CD8-positive, alpha-beta T cell (primary cell): ENCODE measurements at regions of chr1 and their contacts with region 1.

Region 1: DNA sequence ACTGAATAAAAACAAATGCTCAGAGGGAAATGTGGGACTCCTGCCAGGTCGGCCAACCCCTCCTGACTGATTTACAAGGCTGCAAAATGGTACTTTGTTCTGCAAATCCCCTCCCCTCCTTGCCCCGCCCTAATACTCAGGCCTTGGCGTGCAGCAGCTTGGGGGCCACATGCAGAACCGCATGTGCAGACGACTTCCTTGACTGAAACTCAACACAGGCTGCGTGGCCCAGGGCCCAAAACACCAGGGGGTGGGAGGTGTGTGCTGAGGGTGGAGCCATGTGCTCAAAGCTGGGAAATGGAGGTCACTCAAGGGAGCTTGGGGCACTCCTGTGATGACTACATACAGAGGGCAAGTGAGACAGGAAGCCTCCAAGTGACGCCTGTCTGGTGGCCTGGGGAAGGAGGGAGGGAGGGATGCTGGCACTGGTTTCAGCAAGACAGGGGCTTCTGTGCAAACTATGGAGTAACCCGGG is 87.2 kb downstream of the MRPL37 start:
- DNase-seq: peak; percentile 12 to 87 (median 71)
- ATAC-seq: peak; percentile 78
- H3K4me3 ChIP-seq: peak overlapping the region in 1 of 2 experiments; percentile 57
- H3K4me3 Mint-ChIP-seq: peak overlapping the region; percentile 78
- H3K27ac ChIP-seq: peak overlapping the region; percentile 61 to 71
- H3K27ac Mint-ChIP-seq: peak overlapping the region; percentile 99
- H3K4me1 ChIP-seq: peaks cover 96% of the 10 kb centered on the region
- H3K4me1 Mint-ChIP-seq: peaks cover 90% of the 10 kb centered on the region
- H3K27me3 ChIP-seq: no peaks in the 10 kb centered on the region
- H3K27me3 Mint-ChIP-seq: no peaks in the 10 kb centered on the region
- CTCF ChIP-seq: no peak

Region 2: DNA sequence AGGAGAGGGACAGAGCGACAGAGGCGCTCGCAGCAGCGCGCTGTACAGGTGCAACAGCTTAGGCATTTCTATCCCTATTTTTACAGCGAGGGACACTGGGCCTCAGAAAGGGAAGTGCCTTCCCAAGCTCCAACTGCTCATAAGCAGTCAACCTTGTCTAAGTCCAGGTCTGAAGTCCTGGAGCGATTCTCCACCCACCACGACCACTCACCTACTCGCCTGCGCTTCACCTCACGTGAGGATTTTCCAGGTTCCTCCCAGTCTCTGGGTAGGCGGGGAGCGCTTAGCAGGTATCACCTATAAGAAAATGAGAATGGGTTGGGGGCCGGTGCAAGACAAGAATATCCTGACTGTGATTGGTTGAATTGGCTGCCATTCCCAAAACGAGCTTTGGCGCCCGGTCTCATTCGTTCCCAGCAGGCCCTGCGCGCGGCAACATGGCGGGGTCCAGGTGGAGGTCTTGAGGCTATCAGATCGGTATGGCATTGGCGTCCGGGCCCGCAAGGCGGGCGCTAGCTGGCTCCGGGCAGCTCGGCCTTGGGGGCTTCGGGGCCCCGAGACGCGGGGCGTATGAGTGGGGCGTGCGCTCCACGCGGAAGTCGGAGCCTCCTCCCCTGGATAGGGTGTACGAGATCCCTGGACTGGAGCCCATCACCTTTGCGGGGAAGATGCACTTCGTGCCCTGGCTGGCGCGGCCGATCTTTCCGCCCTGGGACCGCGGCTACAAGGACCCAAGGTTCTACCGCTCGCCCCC is 87.3 kb before region 1 on chr1 and contains the starts of genes CYB5RL and MRPL37:
- CTCF ChIA-PET with region 1: no interaction called
- POLR2A ChIA-PET with region 1: interaction called, 5 read pairs
- intact Hi-C with region 1: loop called in 1 of 2 experiments (anchors 1 kb)
- DNase-seq: peak; percentile 74 to 96 (median 89)
- ATAC-seq: peak; percentile 97
- H3K4me3 ChIP-seq: peak within 1 kb of the TSS; percentile 59 to 93
- H3K4me3 Mint-ChIP-seq: peak within 1 kb of the TSS; percentile 94
- H3K27ac ChIP-seq: peak within 1 kb of the TSS; percentile 60 to 75
- H3K27ac Mint-ChIP-seq: peak within 1 kb of the TSS; percentile 84
- H3K4me1 ChIP-seq: peaks cover 19% of the 10 kb centered on the region
- H3K4me1 Mint-ChIP-seq: peaks cover 43% of the 10 kb centered on the region
- H3K27me3 ChIP-seq: no peaks in the 10 kb centered on the region
- H3K27me3 Mint-ChIP-seq: no peaks in the 10 kb centered on the region
- CTCF ChIP-seq: no peak
- total RNA-seq, gene CYB5RL: 2.1 to 3.0 TPM
- total RNA-seq, gene MRPL37: 27.4 to 29.8 TPM

Region 3: DNA sequence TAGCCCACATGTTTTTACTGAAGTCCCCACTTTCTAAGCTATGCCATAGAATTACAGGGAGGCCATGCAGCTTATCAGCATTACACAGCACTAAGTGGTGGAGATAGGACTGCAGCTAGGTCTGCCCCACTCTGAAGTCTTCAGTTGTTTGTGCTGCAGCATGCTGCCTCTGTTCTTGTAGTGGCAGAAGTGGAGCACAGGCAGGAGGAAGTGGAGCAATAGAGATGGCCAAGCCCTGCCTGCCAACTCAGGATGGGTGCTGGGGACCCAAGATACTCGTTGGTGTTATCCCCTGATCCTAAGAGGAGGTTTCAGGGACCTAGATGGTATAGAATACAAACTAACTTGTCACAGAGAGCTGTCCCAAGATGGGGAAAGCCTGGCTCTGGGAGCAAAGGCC is 74.3 kb before region 1 on chr1:
- CTCF ChIA-PET with region 1: no interaction called
- POLR2A ChIA-PET with region 1: no interaction called
- intact Hi-C with region 1: no loop called
- DNase-seq: no peak
- ATAC-seq: no peak
- H3K4me3 ChIP-seq: no peak overlapping the region
- H3K4me3 Mint-ChIP-seq: no peak overlapping the region
- H3K27ac ChIP-seq: no peak overlapping the region
- H3K27ac Mint-ChIP-seq: no peak overlapping the region
- H3K4me1 ChIP-seq: no peaks in the 10 kb centered on the region
- H3K4me1 Mint-ChIP-seq: no peaks in the 10 kb centered on the region
- H3K27me3 ChIP-seq: no peaks in the 10 kb centered on the region
- H3K27me3 Mint-ChIP-seq: no peaks in the 10 kb centered on the region
- CTCF ChIP-seq: no peak

Region 4: GRCh38 chr1:54297596-54298283 is 10.5 kb after region 1 on chr1:
- CTCF ChIA-PET with region 1: interaction called, 5 read pairs
- POLR2A ChIA-PET with region 1: interaction called, 10 read pairs
- intact Hi-C with region 1: no loop called
- DNase-seq: no peak
- ATAC-seq: no peak
- H3K4me3 ChIP-seq: no peak overlapping the region
- H3K4me3 Mint-ChIP-seq: peak overlapping the region; percentile 49
- H3K27ac ChIP-seq: peak overlapping the region in 1 of 2 experiments; percentile 29
- H3K27ac Mint-ChIP-seq: peak overlapping the region; percentile 66
- H3K4me1 ChIP-seq: peaks cover 77% of the 10 kb centered on the region
- H3K4me1 Mint-ChIP-seq: peaks cover 90% of the 10 kb centered on the region
- H3K27me3 ChIP-seq: no peaks in the 10 kb centered on the region
- H3K27me3 Mint-ChIP-seq: no peaks in the 10 kb centered on the region
- CTCF ChIP-seq: no peak

Region 5: GRCh38 chr1:54310439-54311328 is 23.5 kb after region 1 on chr1:
- CTCF ChIA-PET with region 1: interaction called, 7 read pairs
- POLR2A ChIA-PET with region 1: interaction called, 5 read pairs
- intact Hi-C with region 1: loop called in 1 of 2 experiments (anchors 1 kb)
- DNase-seq: peak in 3 of 9 experiments; percentile 26 to 47 (median 28)
- ATAC-seq: peak; percentile 55
- H3K4me3 ChIP-seq: peak overlapping the region in 1 of 2 experiments; percentile 1
- H3K4me3 Mint-ChIP-seq: peak overlapping the region; percentile 61
- H3K27ac ChIP-seq: no peak overlapping the region
- H3K27ac Mint-ChIP-seq: peak overlapping the region; percentile 80
- H3K4me1 ChIP-seq: peaks cover 72% of the 10 kb centered on the region
- H3K4me1 Mint-ChIP-seq: peaks cover 80% of the 10 kb centered on the region
- H3K27me3 ChIP-seq: no peaks in the 10 kb centered on the region
- H3K27me3 Mint-ChIP-seq: no peaks in the 10 kb centered on the region
- CTCF ChIP-seq: no peak

Region 6: GRCh38 chr1:54355931-54356679 is 68.9 kb after region 1 on chr1:
- CTCF ChIA-PET with region 1: interaction called, 4 read pairs
- POLR2A ChIA-PET with region 1: interaction called, 4 read pairs
- intact Hi-C with region 1: loop called (anchors 2 to 5 kb)
- DNase-seq: peak in 2 of 9 experiments; percentile 29 to 54
- ATAC-seq: peak; percentile 3
- H3K4me3 ChIP-seq: peak overlapping the region; percentile 36 to 64
- H3K4me3 Mint-ChIP-seq: peak overlapping the region; percentile 86
- H3K27ac ChIP-seq: peak overlapping the region; percentile 18 to 41
- H3K27ac Mint-ChIP-seq: peak overlapping the region; percentile 92
- H3K4me1 ChIP-seq: peaks cover 53% of the 10 kb centered on the region
- H3K4me1 Mint-ChIP-seq: peaks cover 88% of the 10 kb centered on the region
- H3K27me3 ChIP-seq: no peaks in the 10 kb centered on the region
- H3K27me3 Mint-ChIP-seq: no peaks in the 10 kb centered on the region
- CTCF ChIP-seq: no peak

Region 7: GRCh38 chr1:54754045-54754444 is 466.8 kb after region 1 on chr1:
- CTCF ChIA-PET with region 1: no interaction called
- POLR2A ChIA-PET with region 1: no interaction called
- intact Hi-C with region 1: no loop called
- DNase-seq: no peak
- ATAC-seq: no peak
- H3K4me3 ChIP-seq: no peak overlapping the region
- H3K4me3 Mint-ChIP-seq: no peak overlapping the region
- H3K27ac ChIP-seq: no peak overlapping the region
- H3K27ac Mint-ChIP-seq: no peak overlapping the region
- H3K4me1 ChIP-seq: no peaks in the 10 kb centered on the region
- H3K4me1 Mint-ChIP-seq: no peaks in the 10 kb centered on the region
- H3K27me3 ChIP-seq: no peaks in the 10 kb centered on the region
- H3K27me3 Mint-ChIP-seq: no peaks in the 10 kb centered on the region
- CTCF ChIP-seq: no peak